Activated T-helper 2 cell treated with anti-CD3 and anti-CD28 coated beads, Interferon-gamma antibody, Interleukin-2, Interleukin-4, amounts not matched to agents 10 μg/mL and 5 μg/mL and 100 μg/mL, durations not matched to agents 14 hours and 24 hours and 36 hours (primary cell): ENCODE measurements at regions of chr2 and their contacts with region 1.

Region 1: DNA sequence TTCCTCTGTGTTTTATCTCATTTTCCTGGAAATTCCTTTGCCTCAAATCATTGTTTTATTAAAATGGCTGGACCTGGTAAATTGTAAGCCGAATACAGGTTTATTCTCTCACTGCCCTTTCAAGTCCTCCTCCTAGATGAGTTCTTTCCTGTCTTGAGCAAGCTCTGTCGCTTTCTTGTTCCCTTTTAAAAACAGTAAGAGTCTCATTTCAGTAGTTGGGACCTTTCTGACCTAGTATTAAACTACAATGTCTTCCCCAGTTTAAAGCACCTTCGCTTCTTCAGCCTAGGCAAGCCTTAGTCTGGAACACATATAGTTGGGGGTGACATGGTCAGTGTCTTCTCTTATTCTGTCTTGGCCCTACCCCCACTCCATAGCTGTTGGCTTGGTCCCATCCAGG is 40.9 kb upstream of the SP140L start:
- DNase-seq: no peak
- H3K4me3 Mint-ChIP-seq: no peak overlapping the region
- H3K27ac Mint-ChIP-seq: peak overlapping the region; percentile 4
- H3K4me1 Mint-ChIP-seq: peaks cover 34% of the 10 kb centered on the region
- H3K27me3 Mint-ChIP-seq: no peaks in the 10 kb centered on the region

Region 2: DNA sequence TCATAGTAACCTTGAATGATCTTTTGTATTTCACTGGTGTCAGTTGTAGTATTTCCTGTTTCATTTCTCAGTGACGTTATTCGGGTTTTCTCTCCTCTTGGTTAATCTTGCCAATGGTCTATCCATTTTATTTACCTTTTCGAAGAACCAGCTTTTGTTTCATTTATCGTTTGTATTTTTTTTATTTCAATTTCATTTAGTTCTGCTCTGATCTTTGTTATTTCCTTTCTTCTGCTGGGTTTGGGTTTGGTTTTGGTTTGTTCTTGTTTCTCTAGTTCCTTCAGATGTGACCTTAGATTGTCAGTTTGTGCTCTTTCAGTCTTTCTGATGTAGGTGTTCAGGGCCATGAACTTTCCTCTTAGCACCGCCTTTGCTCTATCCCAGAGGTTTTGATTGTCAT is 23.8 kb before region 1 on chr2:
- intact Hi-C with region 1: loop called (anchors 2 kb)
- DNase-seq: no peak
- H3K4me3 Mint-ChIP-seq: peak overlapping the region; percentile 48
- H3K27ac Mint-ChIP-seq: peak overlapping the region; percentile 82
- H3K4me1 Mint-ChIP-seq: peaks cover 74% of the 10 kb centered on the region
- H3K27me3 Mint-ChIP-seq: no peaks in the 10 kb centered on the region

Region 3: DNA sequence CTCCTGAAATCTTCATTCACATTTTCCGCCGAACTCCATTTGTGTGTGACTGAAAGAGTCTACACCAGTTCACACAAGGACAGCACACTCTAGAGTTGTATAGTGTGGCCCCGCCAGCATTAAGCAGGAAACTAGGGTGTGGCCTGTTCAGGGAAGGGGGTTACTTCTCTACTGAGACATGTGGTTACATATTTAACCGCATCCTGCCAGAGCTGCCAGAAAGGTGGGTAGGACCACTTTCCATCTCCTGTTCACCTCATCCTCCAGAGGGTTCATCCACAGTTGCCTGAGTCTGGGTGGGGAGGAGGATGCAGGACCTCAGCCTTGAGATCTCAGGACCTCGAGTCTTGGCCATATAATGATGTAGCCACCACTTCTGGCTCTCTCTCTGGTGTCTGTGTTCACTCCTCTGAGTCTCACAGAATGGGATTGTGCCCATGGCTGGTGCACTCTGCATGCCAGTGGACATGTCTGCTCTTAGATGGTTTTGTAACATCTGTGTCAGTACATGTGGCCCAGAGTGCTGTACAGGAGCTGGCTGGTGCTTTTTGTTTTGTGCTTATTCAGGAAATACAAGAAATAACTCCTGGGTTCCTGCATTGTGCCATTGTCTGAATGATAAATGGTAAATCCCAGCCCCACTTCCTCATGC is 33.3 kb after region 1 on chr2:
- intact Hi-C with region 1: loop called (anchors 2 kb)
- DNase-seq: peak; percentile 79
- H3K4me3 Mint-ChIP-seq: peak overlapping the region; percentile 61
- H3K27ac Mint-ChIP-seq: peak overlapping the region; percentile 94
- H3K4me1 Mint-ChIP-seq: peaks cover 60% of the 10 kb centered on the region
- H3K27me3 Mint-ChIP-seq: no peaks in the 10 kb centered on the region